ENCODE measurements at regions of chr15 and their contacts with region 1.

Region 1: DNA sequence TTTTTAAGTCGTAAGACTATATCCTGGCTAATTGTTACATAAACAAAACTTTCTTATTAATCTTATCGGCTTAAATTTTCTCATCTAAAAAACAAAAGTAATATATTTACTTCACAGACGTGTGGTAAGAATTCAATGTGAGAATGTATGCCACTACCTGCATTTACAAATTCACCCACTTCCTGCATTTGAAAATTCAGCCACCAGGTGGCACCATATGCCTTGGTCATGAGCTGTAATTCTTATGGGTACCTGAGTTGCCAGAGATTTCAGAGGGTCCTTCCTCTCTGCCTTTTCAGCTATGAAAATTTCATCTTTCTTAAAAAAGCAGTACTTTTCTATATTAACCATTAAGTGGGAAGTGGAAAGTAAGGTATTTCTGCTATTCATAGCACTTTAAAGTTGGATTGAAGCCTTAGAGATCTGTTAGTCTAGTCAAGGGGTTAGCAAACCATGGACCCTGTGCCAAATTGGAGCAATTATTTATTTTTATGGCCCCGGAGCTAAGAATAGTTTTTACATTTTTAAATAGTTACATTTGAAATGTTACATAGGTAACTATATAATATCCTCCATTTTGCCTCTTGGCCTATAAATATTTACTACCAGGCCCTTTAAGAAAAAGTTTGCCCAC is 127.8 kb downstream of the HCN4 start:
- DNase-seq: peak in 2 of 3 donors; percentile 47 to 67
- ATAC-seq: peak in 1 of 2 donors; percentile 54
- H3K4me3 ChIP-seq: no peak overlapping the region
- H3K27ac ChIP-seq: no peak overlapping the region
- H3K4me1 ChIP-seq: no peaks in the 10 kb centered on the region
- H3K27me3 ChIP-seq: no peaks in the 10 kb centered on the region

Region 2: GRCh38 chr15:73183071-73183470 is 57.9 kb before region 1 on chr15:
- intact Hi-C with region 1: no loop called
- DNase-seq: no peak
- ATAC-seq: no peak
- H3K4me3 ChIP-seq: no peak overlapping the region
- H3K27ac ChIP-seq: no peak overlapping the region
- H3K4me1 ChIP-seq: no peaks in the 10 kb centered on the region
- H3K27me3 ChIP-seq: no peaks in the 10 kb centered on the region

Region 3: GRCh38 chr15:73273181-73274002 is 32.4 kb after region 1 on chr15:
- intact Hi-C with region 1: loop called in 1 of 4 experiments (anchors 1 kb)
- DNase-seq: peak in 2 of 3 donors; percentile 22 to 44
- ATAC-seq: peak; percentile 75 to 91
- H3K4me3 ChIP-seq: no peak overlapping the region
- H3K27ac ChIP-seq: no peak overlapping the region
- H3K4me1 ChIP-seq: no peaks in the 10 kb centered on the region
- H3K27me3 ChIP-seq: no peaks in the 10 kb centered on the region

Measured in right cardiac atrium (tissue), 5 donors.